ENCODE measurements at regions of chr10 and their contacts with region 1.

Region 1: GRCh38 chr10:25226775-25227682 is 52.2 kb downstream of the GPR158 start:
- DNase-seq: peak; percentile 21
- ATAC-seq: peak; percentile 69
- H3K4me3 ChIP-seq: no peak overlapping the region
- H3K27ac ChIP-seq: no peak overlapping the region
- H3K4me1 ChIP-seq: no peaks in the 10 kb centered on the region
- H3K27me3 ChIP-seq: no peaks in the 10 kb centered on the region
- CTCF ChIP-seq: peak; percentile 78
- EP300 ChIP-seq: no peak
- POLR2A ChIP-seq: no peak
- RAD21 ChIP-seq: 0 out of 2 replicates have a peak, but pooled peaks have one; percentile 32

Region 2: DNA sequence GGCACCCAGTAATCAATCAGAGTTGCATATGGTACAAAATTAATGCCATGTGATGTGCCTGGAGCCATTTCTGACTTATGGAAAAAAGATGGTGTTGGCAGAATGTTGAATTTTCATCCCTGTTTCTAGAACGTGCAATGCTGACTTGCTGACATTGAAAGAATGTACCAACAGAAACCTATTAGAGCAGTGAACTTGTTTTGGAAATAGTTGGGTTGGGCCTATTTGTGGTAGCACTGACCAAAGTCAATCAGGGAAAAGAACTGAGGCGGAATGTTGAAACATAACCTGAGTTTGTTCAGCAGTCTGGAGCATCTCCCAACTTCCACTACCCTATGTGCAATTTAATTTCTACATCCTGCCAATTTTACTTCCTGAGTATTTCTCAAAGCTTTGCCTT is 1029.8 kb before region 1 on chr10:
- CTCF ChIA-PET with region 1: no interaction called
- POLR2A ChIA-PET with region 1: no interaction called
- in situ Hi-C with region 1: no loop called
- intact Hi-C with region 1: no loop called
- DNase-seq: no peak
- ATAC-seq: no peak
- H3K4me3 ChIP-seq: no peak overlapping the region
- H3K27ac ChIP-seq: no peak overlapping the region
- H3K4me1 ChIP-seq: peaks cover 12% of the 10 kb centered on the region
- H3K27me3 ChIP-seq: no peaks in the 10 kb centered on the region
- CTCF ChIP-seq: no peak
- EP300 ChIP-seq: no peak
- POLR2A ChIP-seq: no peak
- RAD21 ChIP-seq: no peak

Region 3: DNA sequence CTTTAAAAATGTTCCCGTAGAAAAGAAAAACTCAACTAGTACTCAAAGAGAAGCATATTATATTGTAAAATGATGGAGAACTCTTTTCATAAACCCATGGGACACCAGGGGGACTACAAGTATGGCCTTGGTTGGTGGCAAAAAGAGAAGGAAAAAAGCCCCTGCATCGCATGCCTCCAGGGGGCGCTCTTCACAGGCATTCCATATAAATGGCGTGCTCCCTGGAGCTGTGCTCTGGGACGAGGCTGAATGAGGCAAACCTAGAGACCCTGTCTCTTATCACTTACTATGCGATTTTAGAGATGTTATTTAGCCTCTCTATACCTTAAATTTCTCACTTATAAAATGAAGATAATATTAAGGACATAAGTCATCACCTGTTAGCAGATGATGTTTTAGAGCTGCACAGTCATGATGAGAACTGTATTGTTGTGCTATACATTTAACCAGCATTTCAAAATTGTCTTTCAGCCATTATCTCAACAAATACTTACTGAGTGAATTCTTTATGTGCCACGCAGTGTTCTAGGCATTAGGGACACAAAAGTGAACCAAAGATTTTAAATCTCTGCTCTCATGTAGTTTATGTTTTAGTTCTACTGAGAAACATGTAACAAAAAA is 609.1 kb before region 1 on chr10:
- CTCF ChIA-PET with region 1: interaction called, 13 read pairs
- POLR2A ChIA-PET with region 1: no interaction called
- in situ Hi-C with region 1: loop called (anchors 10 kb)
- intact Hi-C with region 1: loop called (anchors 2 kb)
- DNase-seq: peak; percentile 50
- ATAC-seq: peak; percentile 95
- H3K4me3 ChIP-seq: no peak overlapping the region
- H3K27ac ChIP-seq: no peak overlapping the region
- H3K4me1 ChIP-seq: no peaks in the 10 kb centered on the region
- H3K27me3 ChIP-seq: no peaks in the 10 kb centered on the region
- CTCF ChIP-seq: peak; percentile 77
- EP300 ChIP-seq: no peak
- POLR2A ChIP-seq: no peak
- RAD21 ChIP-seq: peak; percentile 69

Region 4: DNA sequence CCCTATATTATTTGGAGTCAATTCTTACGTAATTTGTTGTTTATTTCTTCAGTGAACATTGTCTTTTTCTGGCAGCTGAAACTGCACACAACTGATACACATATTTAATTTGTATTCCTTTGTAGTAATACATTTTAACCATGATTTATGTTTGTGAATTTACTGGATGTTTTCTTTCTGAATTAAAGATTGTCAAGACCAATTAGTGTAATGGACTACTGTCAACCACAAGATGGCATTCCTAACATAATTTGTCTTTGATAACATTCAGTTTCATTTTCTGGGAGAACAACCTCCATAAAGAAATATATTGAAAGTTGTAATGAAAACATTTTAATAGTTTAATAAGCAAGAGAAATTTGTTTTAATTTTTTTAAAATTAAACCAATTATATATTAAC is 200.6 kb before region 1 on chr10:
- CTCF ChIA-PET with region 1: no interaction called
- POLR2A ChIA-PET with region 1: no interaction called
- in situ Hi-C with region 1: no loop called
- intact Hi-C with region 1: loop called (anchors 2 kb)
- DNase-seq: no peak
- ATAC-seq: no peak
- H3K4me3 ChIP-seq: no peak overlapping the region
- H3K27ac ChIP-seq: no peak overlapping the region
- H3K4me1 ChIP-seq: 0 out of 2 replicates have a peak, but pooled peaks cover 6% of the 10 kb centered on the region
- H3K27me3 ChIP-seq: no peaks in the 10 kb centered on the region
- CTCF ChIP-seq: peak; percentile 42
- EP300 ChIP-seq: no peak
- POLR2A ChIP-seq: no peak
- RAD21 ChIP-seq: no peak

Region 5: DNA sequence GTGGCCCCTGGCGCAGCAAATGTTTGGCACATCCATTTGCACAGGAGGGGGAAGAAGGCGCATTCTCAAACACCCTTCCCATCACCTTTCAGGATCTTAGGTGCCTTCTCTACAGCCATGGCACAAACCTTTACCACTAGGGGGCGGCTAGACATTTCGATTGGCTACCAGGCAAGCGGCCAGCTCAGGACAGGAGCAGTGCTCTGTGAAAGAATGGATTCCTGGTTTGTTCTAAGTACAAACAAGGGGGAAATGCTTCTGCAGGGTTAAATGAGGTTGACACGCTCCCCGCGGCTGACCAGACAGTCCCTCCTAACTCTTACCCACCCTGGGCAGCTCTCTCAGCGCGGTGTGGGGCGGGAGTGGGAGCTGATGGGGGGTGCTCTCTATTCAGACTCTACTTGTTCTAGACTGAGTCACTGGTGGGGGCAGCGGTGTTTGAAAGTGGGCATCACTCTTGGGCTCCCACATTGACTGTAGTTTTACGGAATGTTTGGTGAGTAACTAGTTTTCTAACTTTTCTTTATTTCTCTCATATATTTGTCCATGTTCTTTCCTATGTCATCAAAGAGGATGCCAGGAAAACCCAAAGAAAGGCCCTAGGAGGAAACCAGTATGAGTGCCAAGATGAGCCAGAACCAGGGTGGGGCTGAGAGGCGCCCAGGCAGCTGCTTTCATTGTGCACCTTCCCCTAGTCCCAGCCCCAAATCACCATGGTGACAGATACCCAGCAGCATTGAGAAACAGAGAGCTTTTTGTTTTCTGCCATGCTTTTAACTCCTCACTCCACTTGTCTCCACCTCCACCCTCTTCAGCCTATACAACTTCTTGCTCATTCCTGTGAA is 113.6 kb before region 1 on chr10:
- CTCF ChIA-PET with region 1: interaction called, 12 read pairs
- POLR2A ChIA-PET with region 1: no interaction called
- in situ Hi-C with region 1: loop called (anchors 10 kb)
- intact Hi-C with region 1: loop called (anchors 1 kb)
- DNase-seq: peak; percentile 57
- ATAC-seq: peak; percentile 99
- H3K4me3 ChIP-seq: no peak overlapping the region; a peak in 1 of 6 replicates
- H3K27ac ChIP-seq: no peak overlapping the region
- H3K4me1 ChIP-seq: peaks cover 11% of the 10 kb centered on the region
- H3K27me3 ChIP-seq: no peaks in the 10 kb centered on the region; a peak in 1 of 5 replicates
- CTCF ChIP-seq: peak; percentile 89
- EP300 ChIP-seq: no peak
- POLR2A ChIP-seq: no peak
- RAD21 ChIP-seq: peak; percentile 43; the same call in 1 of the 2 replicates